GM12878 (cell line): ENCODE measurements at regions of chr3 and their contacts with region 1.

Region 1: GRCh38 chr3:7573330-7573729 is 712.4 kb downstream of the GRM7 start:
- DNase-seq: no peak
- ATAC-seq: no peak
- H3K4me3 ChIP-seq: no peak overlapping the region
- H3K27ac ChIP-seq: no peak overlapping the region
- H3K4me1 ChIP-seq: no peaks in the 10 kb centered on the region
- H3K27me3 ChIP-seq: no peaks in the 10 kb centered on the region
- CTCF ChIP-seq: no peak
- EP300 ChIP-seq: no peak
- POLR2A ChIP-seq: no peak
- RAD21 ChIP-seq: no peak

Region 2: DNA sequence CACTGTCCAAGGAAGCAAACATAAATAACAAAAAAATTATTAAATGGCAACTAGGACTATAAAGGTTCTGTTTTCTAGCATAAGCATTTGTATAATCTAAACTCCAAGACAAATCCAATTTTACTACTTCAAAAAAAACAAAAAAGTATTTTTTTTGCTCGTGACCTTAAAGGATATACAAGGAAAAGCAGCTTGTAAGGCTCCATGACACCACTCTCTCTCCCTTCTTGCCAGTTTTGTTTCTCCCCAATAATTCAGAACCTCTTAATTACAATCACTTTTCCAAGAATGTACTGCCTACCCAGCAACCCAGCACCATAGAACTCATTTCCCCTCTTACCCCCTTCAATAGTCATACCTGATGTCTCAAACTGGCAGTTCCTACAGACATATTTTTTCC is 216.2 kb before region 1 on chr3:
- CTCF ChIA-PET with region 1: no interaction called
- POLR2A ChIA-PET with region 1: no interaction called
- RAD21 ChIA-PET with region 1: no interaction called
- SMC1A ChIA-PET with region 1: no interaction called
- in situ Hi-C with region 1: no loop called
- intact Hi-C with region 1: no loop called
- DNase-seq: no peak
- ATAC-seq: no peak
- H3K4me3 ChIP-seq: no peak overlapping the region
- H3K27ac ChIP-seq: no peak overlapping the region
- H3K4me1 ChIP-seq: no peaks in the 10 kb centered on the region
- H3K27me3 ChIP-seq: no peaks in the 10 kb centered on the region
- CTCF ChIP-seq: no peak
- EP300 ChIP-seq: no peak
- POLR2A ChIP-seq: no peak
- RAD21 ChIP-seq: no peak

Region 3: DNA sequence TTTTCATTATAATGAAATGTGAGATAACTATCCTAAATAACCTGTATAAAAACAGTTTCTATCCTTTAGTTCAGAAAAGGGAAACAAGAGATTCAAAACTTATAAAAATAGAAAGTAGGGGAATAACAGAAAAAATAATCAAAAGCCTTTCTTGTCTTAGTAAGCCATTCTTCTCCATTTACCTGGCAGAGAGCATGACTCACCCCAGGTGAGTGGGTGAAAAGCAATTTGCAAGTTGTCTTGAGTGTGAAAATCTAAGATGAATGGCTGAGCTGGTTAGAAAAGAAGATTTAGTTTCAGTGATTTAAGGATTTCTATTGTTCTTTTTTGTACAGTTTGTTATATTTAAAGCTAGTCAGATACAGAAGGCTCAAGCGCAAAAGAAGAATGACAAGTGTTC is 10.4 kb before region 1 on chr3:
- CTCF ChIA-PET with region 1: no interaction called
- POLR2A ChIA-PET with region 1: interaction called, 5 read pairs
- RAD21 ChIA-PET with region 1: interaction called, 3 read pairs
- SMC1A ChIA-PET with region 1: interaction called, 10 read pairs
- in situ Hi-C with region 1: no loop called
- intact Hi-C with region 1: no loop called
- DNase-seq: no peak
- ATAC-seq: no peak
- H3K4me3 ChIP-seq: no peak overlapping the region
- H3K27ac ChIP-seq: no peak overlapping the region
- H3K4me1 ChIP-seq: no peaks in the 10 kb centered on the region
- H3K27me3 ChIP-seq: no peaks in the 10 kb centered on the region
- CTCF ChIP-seq: no peak
- EP300 ChIP-seq: no peak; a peak in 1 of 4 replicates
- POLR2A ChIP-seq: no peak
- RAD21 ChIP-seq: no peak

Region 4: DNA sequence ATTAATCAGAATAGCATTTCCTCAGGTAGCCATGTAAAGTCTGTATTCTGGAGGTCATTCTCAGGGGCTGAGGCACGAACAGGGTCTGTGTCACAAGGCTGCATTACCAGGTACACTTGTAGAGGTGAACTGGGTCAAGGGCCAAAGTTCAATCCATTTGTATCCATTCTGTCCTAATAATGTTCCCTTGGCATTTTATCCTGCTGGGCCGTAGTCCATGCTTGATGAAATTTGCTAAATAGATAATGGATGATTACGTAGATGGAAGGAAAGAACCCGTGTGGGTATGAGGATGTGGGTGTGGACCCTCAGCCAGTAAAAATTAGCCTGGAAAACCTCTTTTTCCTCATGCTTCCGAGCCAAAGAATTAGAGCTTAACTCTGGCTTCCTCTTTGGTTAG is 73.5 kb after region 1 on chr3:
- CTCF ChIA-PET with region 1: no interaction called
- POLR2A ChIA-PET with region 1: no interaction called
- RAD21 ChIA-PET with region 1: no interaction called
- SMC1A ChIA-PET with region 1: no interaction called
- in situ Hi-C with region 1: no loop called
- intact Hi-C with region 1: no loop called
- DNase-seq: no peak
- ATAC-seq: no peak
- H3K4me3 ChIP-seq: no peak overlapping the region
- H3K27ac ChIP-seq: no peak overlapping the region
- H3K4me1 ChIP-seq: no peaks in the 10 kb centered on the region
- H3K27me3 ChIP-seq: no peaks in the 10 kb centered on the region
- CTCF ChIP-seq: no peak
- EP300 ChIP-seq: no peak
- POLR2A ChIP-seq: no peak
- RAD21 ChIP-seq: no peak